ENCODE measurements at regions of chr5 and their contacts with region 1.

Region 1: GRCh38 chr5:76402886-76403765 is at the start of gene IQGAP2:
- DNase-seq: peak; percentile 94
- ATAC-seq: peak; percentile 75
- H3K4me3 ChIP-seq: peak within 1 kb of the TSS; percentile 61 to 78 (median 70)
- H3K4me3 Mint-ChIP-seq: peak within 1 kb of the TSS; percentile 97
- H3K27ac ChIP-seq: peak within 1 kb of the TSS; percentile 95 to 96
- H3K27ac Mint-ChIP-seq: peak within 1 kb of the TSS; percentile 95
- H3K4me1 ChIP-seq: peaks cover 23 to 45% of the 10 kb centered on the region in 2 donors
- H3K4me1 Mint-ChIP-seq: peaks cover 49% of the 10 kb centered on the region
- H3K27me3 ChIP-seq: peaks cover 0 to 4% (median 0%) of the 10 kb centered on the region in 4 experiments
- H3K27me3 Mint-ChIP-seq: peaks cover 5% of the 10 kb centered on the region
- CTCF ChIP-seq: peak; percentile 79
- total RNA-seq, gene IQGAP2: 12.3 and 15.0 TPM in 2 replicates

Region 2: GRCh38 chr5:75336625-75337339 is 1066.3 kb before region 1 on chr5 and contains the start of gene HMGCR:
- CTCF ChIA-PET with region 1: no interaction called
- POLR2A ChIA-PET with region 1: no interaction called
- intact Hi-C with region 1: loop called (anchors 5 kb)
- DNase-seq: peak; percentile 99
- ATAC-seq: peak; percentile 95
- H3K4me3 ChIP-seq: peak within 1 kb of the TSS; percentile 71 to 98 (median 88)
- H3K4me3 Mint-ChIP-seq: no peak within 1 kb of the TSS
- H3K27ac ChIP-seq: peak within 1 kb of the TSS; percentile 81 to 91
- H3K27ac Mint-ChIP-seq: no peak within 1 kb of the TSS
- H3K4me1 ChIP-seq: peaks cover 16 to 17% of the 10 kb centered on the region in 2 donors
- H3K4me1 Mint-ChIP-seq: peaks cover 30% of the 10 kb centered on the region
- H3K27me3 ChIP-seq: no peaks in the 10 kb centered on the region
- H3K27me3 Mint-ChIP-seq: no peaks in the 10 kb centered on the region
- CTCF ChIP-seq: peak; percentile 9
- total RNA-seq, gene HMGCR: 55.7 and 64.6 TPM in 2 replicates

Region 3: DNA sequence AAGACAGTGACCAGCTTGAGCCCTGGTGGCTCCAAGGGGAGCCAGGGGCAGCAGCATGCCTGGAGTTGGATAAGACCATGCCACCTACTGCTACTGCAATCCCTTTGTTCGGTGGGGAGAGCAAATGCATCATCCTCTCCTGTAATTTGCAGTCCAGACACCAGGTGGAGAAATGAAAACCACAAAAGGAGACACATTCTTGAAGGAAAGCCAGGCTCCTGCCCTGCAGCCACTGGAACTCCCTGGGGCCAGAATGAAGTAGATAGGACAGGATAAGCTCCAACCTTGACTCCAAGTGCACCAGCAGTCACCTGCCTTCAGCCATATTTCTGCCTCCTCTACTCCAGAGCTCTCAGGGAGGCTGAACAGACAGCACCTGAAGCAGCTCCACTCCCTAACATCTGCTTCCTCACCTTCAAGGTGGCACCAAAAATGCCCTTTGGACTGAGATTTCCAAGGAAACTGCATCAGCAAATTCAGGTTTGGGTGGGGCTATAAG is 65.1 kb before region 1 on chr5:
- CTCF ChIA-PET with region 1: interaction called, 3 read pairs
- POLR2A ChIA-PET with region 1: no interaction called
- intact Hi-C with region 1: loop called (anchors 5 kb)
- DNase-seq: peak; percentile 63
- ATAC-seq: peak; percentile 39
- H3K4me3 ChIP-seq: no peak overlapping the region
- H3K4me3 Mint-ChIP-seq: no peak overlapping the region
- H3K27ac ChIP-seq: no peak overlapping the region
- H3K27ac Mint-ChIP-seq: no peak overlapping the region
- H3K4me1 ChIP-seq: peaks cover 4 to 11% of the 10 kb centered on the region in 2 donors
- H3K4me1 Mint-ChIP-seq: peaks cover 6% of the 10 kb centered on the region
- H3K27me3 ChIP-seq: no peaks in the 10 kb centered on the region
- H3K27me3 Mint-ChIP-seq: peaks cover 9% of the 10 kb centered on the region
- CTCF ChIP-seq: peak; percentile 23

Region 4: GRCh38 chr5:76479973-76480667 is 77.0 kb after region 1 on chr5:
- CTCF ChIA-PET with region 1: no interaction called
- POLR2A ChIA-PET with region 1: no interaction called
- intact Hi-C with region 1: no loop called
- DNase-seq: no peak
- ATAC-seq: no peak
- H3K4me3 ChIP-seq: no peak overlapping the region
- H3K4me3 Mint-ChIP-seq: no peak overlapping the region
- H3K27ac ChIP-seq: no peak overlapping the region
- H3K27ac Mint-ChIP-seq: no peak overlapping the region
- H3K4me1 ChIP-seq: no peaks in the 10 kb centered on the region
- H3K4me1 Mint-ChIP-seq: peaks cover 6% of the 10 kb centered on the region
- H3K27me3 ChIP-seq: no peaks in the 10 kb centered on the region
- H3K27me3 Mint-ChIP-seq: no peaks in the 10 kb centered on the region
- CTCF ChIP-seq: no peak

Region 5: GRCh38 chr5:76544268-76544926 is 141.3 kb after region 1 on chr5:
- CTCF ChIA-PET with region 1: interaction called, 5 read pairs
- POLR2A ChIA-PET with region 1: interaction called, 3 read pairs
- intact Hi-C with region 1: loop called (anchors 2 kb)
- DNase-seq: peak; percentile 45
- ATAC-seq: no peak
- H3K4me3 ChIP-seq: no peak overlapping the region
- H3K4me3 Mint-ChIP-seq: no peak overlapping the region
- H3K27ac ChIP-seq: no peak overlapping the region
- H3K27ac Mint-ChIP-seq: no peak overlapping the region
- H3K4me1 ChIP-seq: peaks cover 41 to 44% of the 10 kb centered on the region in 2 donors
- H3K4me1 Mint-ChIP-seq: peaks cover 51% of the 10 kb centered on the region
- H3K27me3 ChIP-seq: no peaks in the 10 kb centered on the region
- H3K27me3 Mint-ChIP-seq: no peaks in the 10 kb centered on the region
- CTCF ChIP-seq: peak; percentile 37

Region 6: DNA sequence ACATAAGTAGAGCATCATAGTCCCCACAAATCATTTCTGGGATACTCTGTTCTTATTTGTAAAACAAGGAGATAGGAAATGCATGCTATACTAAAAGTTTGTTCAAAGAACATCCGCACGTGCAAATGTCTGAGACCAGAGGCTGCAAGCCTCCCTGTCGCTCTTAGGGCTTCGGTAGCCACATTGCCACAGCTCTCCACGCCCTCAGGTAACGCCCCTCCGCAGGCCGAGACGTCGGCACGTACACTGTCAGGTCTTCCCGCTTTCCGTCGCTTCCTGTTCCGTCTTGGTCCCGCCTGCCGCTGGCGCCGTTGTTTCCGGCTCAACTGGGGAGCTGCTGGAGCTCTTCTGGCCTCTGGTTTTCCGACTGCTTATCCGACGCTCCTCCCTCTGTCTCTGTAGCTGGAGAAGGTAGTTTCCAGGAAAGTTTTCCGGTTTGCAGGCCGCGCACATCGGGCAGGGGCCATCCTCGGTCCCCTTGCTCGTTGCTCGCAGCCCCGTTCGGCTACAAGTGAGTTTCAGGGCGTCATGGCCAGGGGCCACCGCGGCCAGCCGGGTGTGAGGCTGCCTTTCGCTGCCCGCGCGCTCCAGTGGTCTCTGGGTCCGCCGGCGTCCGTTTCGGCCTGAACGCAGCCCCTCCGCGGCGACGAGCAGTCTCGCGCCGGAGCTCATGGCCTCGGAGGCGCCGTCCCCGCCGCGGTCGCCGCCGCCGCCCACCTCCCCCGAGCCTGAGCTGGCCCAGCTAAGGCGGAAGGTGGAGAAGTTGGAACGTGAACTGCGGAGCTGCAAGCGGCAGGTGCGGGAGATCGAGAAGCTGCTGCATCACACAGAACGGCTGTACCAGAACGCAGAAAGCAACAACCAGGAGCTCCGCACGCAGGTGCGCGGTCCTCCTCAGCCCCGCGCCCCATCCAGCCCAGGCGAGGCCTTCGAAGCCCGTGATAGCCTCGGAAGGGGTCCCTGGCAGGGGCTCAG is 627.3 kb after region 1 on chr5 and contains the start of gene AGGF1:
- CTCF ChIA-PET with region 1: no interaction called
- POLR2A ChIA-PET with region 1: no interaction called
- intact Hi-C with region 1: loop called (anchors 5 kb)
- DNase-seq: peak; percentile 89
- ATAC-seq: peak; percentile 98
- H3K4me3 ChIP-seq: peak within 1 kb of the TSS; percentile 71 to 99 (median 94)
- H3K4me3 Mint-ChIP-seq: peak within 1 kb of the TSS; percentile 96
- H3K27ac ChIP-seq: peak within 1 kb of the TSS; percentile 65 to 84
- H3K27ac Mint-ChIP-seq: peak within 1 kb of the TSS; percentile 90
- H3K4me1 ChIP-seq: peaks cover 16 to 19% of the 10 kb centered on the region in 2 donors
- H3K4me1 Mint-ChIP-seq: peaks cover 31% of the 10 kb centered on the region
- H3K27me3 ChIP-seq: no peaks in the 10 kb centered on the region
- H3K27me3 Mint-ChIP-seq: peaks cover 7% of the 10 kb centered on the region
- CTCF ChIP-seq: no peak
- total RNA-seq, gene AGGF1: 25.6 and 26.2 TPM in 2 replicates